ENCODE measurements at regions of chr6 and their contacts with region 1.

Region 1: DNA sequence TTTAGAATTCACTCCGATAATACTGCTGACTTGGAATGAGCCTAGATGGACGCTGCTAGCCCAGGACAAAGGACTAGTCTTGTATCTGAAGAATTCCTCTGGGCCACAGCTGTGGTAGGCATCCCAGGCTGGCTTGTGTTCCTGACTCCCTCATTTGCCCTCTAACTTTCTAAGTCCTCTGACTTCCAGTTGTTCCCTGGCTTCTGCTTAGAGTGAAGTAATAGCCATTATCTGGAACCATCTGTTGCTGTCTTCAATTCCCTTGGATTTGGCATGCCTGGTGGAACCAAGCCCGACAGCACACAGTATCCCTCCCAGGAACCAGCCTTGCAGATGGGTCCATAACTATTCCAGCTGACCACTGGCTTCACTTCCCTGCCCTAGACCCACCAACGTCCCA is 376.0 kb downstream of the SYNE1 start:
- DNase-seq: peak; percentile 36 to 76 (median 56)
- ATAC-seq: peak; percentile 71 to 89
- H3K4me3 ChIP-seq: no peak overlapping the region
- H3K27ac ChIP-seq: peak overlapping the region; percentile 46
- H3K4me1 ChIP-seq: peaks cover 3% of the 10 kb centered on the region
- H3K27me3 ChIP-seq: no peaks in the 10 kb centered on the region

Region 2: DNA sequence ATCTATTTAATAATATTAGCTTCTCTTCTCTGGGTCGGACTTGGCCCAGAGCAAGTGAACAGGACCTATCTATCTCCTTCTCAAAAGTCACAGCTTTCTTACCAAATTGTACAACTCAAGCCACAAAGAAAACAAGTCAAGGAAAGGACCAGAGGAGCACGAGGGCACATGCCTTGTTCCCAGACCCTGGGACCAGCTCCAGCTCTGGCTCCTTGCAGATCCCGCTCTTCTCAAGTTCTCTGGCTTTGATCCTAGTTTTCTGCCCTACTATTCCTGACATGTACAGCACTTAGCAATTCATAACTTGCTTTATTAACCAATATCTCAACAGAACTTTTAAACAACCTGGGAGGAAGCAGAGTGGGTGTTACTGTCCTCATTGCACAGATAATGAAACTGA is 267.8 kb before region 1 on chr6:
- intact Hi-C with region 1: no loop called
- DNase-seq: peak in 1 of 3 donors; percentile 55
- ATAC-seq: no peak
- H3K4me3 ChIP-seq: no peak overlapping the region
- H3K27ac ChIP-seq: no peak overlapping the region
- H3K4me1 ChIP-seq: no peaks in the 10 kb centered on the region
- H3K27me3 ChIP-seq: no peaks in the 10 kb centered on the region

Region 3: DNA sequence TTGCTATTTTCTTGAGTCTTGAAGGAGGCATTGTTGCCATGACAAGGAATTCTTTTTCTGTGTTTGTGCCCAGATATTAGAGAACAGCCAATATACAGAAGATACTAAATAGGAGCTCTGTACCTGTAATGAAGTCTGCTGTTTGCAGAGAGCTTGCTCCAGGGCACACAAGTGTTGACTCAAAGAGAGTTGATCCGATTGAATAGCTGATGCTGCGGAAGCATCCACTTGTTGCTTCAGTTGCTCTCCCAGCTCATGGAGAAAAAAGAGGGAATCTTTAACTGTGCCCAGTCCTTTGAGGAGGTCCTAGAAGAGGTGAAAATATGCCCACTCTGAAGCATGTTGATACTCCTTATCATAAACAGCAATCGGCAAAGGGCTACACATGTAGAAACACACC is 42.3 kb before region 1 on chr6:
- intact Hi-C with region 1: loop called in 1 of 4 experiments (anchors 5 kb)
- DNase-seq: no peak
- ATAC-seq: no peak
- H3K4me3 ChIP-seq: no peak overlapping the region
- H3K27ac ChIP-seq: no peak overlapping the region
- H3K4me1 ChIP-seq: peaks cover 1% of the 10 kb centered on the region
- H3K27me3 ChIP-seq: no peaks in the 10 kb centered on the region